B cell (primary cell): ENCODE measurements at regions of chr14 and their contacts with region 1.

Region 1: DNA sequence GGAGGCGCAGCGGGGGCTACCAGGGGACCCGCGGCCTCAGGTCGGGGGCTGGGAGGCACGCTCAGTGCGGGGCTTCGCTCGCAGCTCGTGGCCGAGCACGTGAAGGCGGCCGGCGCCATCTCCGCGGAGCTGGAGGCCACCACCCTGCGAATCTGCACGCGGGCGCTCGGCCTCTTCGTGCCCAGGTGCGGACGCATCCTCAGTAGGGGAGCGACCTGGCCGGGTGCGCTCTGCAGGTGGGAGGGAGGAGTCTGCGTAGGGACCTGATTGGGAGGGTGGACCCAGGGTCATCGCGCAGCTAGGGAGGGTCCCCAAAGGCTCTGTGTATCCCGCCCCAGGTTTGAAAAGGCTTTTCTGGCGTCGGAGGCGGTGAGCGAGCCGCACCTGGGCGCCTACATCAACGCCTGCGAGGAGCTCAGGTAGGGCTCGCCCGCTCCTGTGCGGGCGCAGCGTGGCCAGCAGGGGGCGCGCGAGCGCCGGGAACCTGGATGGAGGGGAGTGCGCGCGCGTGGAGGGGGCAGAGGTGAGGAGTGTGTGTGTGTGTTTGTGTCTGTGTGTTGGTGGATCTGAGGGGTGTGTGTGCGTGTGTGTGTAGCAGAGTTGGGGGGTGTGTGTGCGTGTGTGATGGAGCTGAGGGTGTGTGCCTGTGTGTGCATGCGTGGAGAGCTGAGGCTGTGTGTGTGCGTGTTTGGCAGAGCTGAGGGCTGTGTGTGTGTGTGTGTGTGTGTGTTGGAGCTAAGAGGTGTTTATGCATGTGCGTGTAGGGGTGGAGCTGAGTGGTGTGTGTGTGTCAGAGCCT is 10.3 kb downstream of the EXOC3L4 start:
- DNase-seq: peak; percentile 84
- ATAC-seq: peak; percentile 74
- H3K4me3 ChIP-seq: peak overlapping the region in 1 of 5 experiments; percentile 19
- H3K4me3 Mint-ChIP-seq: peak overlapping the region; percentile 32
- H3K27ac ChIP-seq: no peak overlapping the region
- H3K27ac Mint-ChIP-seq: peak overlapping the region; percentile 56
- H3K4me1 ChIP-seq: peaks cover 43 to 46% of the 10 kb centered on the region in 2 donors
- H3K4me1 Mint-ChIP-seq: peaks cover 30% of the 10 kb centered on the region
- H3K27me3 ChIP-seq: peaks cover 0 to 47% (median 17%) of the 10 kb centered on the region in 4 experiments
- H3K27me3 Mint-ChIP-seq: peaks cover 20% of the 10 kb centered on the region
- CTCF ChIP-seq: peak; percentile 80

Region 2: GRCh38 chr14:103091041-103091882 is 13.6 kb before region 1 on chr14:
- CTCF ChIA-PET with region 1: interaction called, 40 read pairs
- POLR2A ChIA-PET with region 1: interaction called, 4 read pairs
- intact Hi-C with region 1: no loop called
- DNase-seq: peak; percentile 87
- ATAC-seq: peak; percentile 97
- H3K4me3 ChIP-seq: peak overlapping the region in 4 of 5 experiments; percentile 24 to 56 (median 48)
- H3K4me3 Mint-ChIP-seq: peak overlapping the region; percentile 74
- H3K27ac ChIP-seq: no peak overlapping the region
- H3K27ac Mint-ChIP-seq: no peak overlapping the region
- H3K4me1 ChIP-seq: peaks cover 10 to 15% of the 10 kb centered on the region in 2 donors
- H3K4me1 Mint-ChIP-seq: peaks cover 2% of the 10 kb centered on the region
- H3K27me3 ChIP-seq: peaks cover 0 to 21% (median 1%) of the 10 kb centered on the region in 4 experiments
- H3K27me3 Mint-ChIP-seq: no peaks in the 10 kb centered on the region
- CTCF ChIP-seq: peak; percentile 83

Region 3: GRCh38 chr14:103141119-103141796 is 36.4 kb after region 1 on chr14:
- CTCF ChIA-PET with region 1: interaction called, 24 read pairs
- POLR2A ChIA-PET with region 1: no interaction called
- intact Hi-C with region 1: loop called (anchors 2 kb)
- DNase-seq: peak; percentile 42
- ATAC-seq: no peak
- H3K4me3 ChIP-seq: no peak overlapping the region
- H3K4me3 Mint-ChIP-seq: peak overlapping the region; percentile 59
- H3K27ac ChIP-seq: no peak overlapping the region
- H3K27ac Mint-ChIP-seq: peak overlapping the region; percentile 74
- H3K4me1 ChIP-seq: peaks cover 0 to 11% of the 10 kb centered on the region in 2 donors
- H3K4me1 Mint-ChIP-seq: peaks cover 17% of the 10 kb centered on the region
- H3K27me3 ChIP-seq: peaks cover 0 to 22% (median 5%) of the 10 kb centered on the region in 4 experiments
- H3K27me3 Mint-ChIP-seq: peaks cover 39% of the 10 kb centered on the region
- CTCF ChIP-seq: peak; percentile 32

Region 4: GRCh38 chr14:103292426-103293374 is 187.8 kb after region 1 on chr14:
- CTCF ChIA-PET with region 1: interaction called, 70 read pairs
- POLR2A ChIA-PET with region 1: no interaction called
- intact Hi-C with region 1: loop called (anchors 1 kb)
- DNase-seq: peak; percentile 79
- ATAC-seq: peak; percentile 92
- H3K4me3 ChIP-seq: no peak overlapping the region
- H3K4me3 Mint-ChIP-seq: no peak overlapping the region
- H3K27ac ChIP-seq: no peak overlapping the region
- H3K27ac Mint-ChIP-seq: no peak overlapping the region
- H3K4me1 ChIP-seq: peaks cover 0 to 5% of the 10 kb centered on the region in 2 donors
- H3K4me1 Mint-ChIP-seq: peaks cover 1% of the 10 kb centered on the region
- H3K27me3 ChIP-seq: peaks cover 0 to 21% (median 0%) of the 10 kb centered on the region in 4 experiments
- H3K27me3 Mint-ChIP-seq: peaks cover 19% of the 10 kb centered on the region
- CTCF ChIP-seq: peak; percentile 85

Region 5: GRCh38 chr14:103391048-103391447 is 286.2 kb after region 1 on chr14:
- CTCF ChIA-PET with region 1: interaction called, 11 read pairs
- POLR2A ChIA-PET with region 1: no interaction called
- intact Hi-C with region 1: no loop called
- DNase-seq: peak; percentile 75
- ATAC-seq: peak; percentile 76
- H3K4me3 ChIP-seq: no peak overlapping the region
- H3K4me3 Mint-ChIP-seq: peak overlapping the region; percentile 16
- H3K27ac ChIP-seq: no peak overlapping the region
- H3K27ac Mint-ChIP-seq: peak overlapping the region; percentile 68
- H3K4me1 ChIP-seq: peaks cover 42 to 52% of the 10 kb centered on the region in 2 donors
- H3K4me1 Mint-ChIP-seq: peaks cover 69% of the 10 kb centered on the region
- H3K27me3 ChIP-seq: no peaks in the 10 kb centered on the region
- H3K27me3 Mint-ChIP-seq: no peaks in the 10 kb centered on the region
- CTCF ChIP-seq: peak; percentile 89